ENCODE measurements at regions of chr16 and their contacts with region 1.

Region 1: GRCh38 chr16:6663668-6664067 is 669.0 kb upstream of the RBFOX1 start:
- DNase-seq: no peak
- ATAC-seq: no peak
- H3K4me3 ChIP-seq: no peak overlapping the region
- H3K27ac ChIP-seq: no peak overlapping the region
- H3K4me1 ChIP-seq: no peaks in the 10 kb centered on the region
- H3K27me3 ChIP-seq: no peaks in the 10 kb centered on the region
- CTCF ChIP-seq: no peak
- EP300 ChIP-seq: no peak
- POLR2A ChIP-seq: no peak
- RAD21 ChIP-seq: no peak

Region 2: DNA sequence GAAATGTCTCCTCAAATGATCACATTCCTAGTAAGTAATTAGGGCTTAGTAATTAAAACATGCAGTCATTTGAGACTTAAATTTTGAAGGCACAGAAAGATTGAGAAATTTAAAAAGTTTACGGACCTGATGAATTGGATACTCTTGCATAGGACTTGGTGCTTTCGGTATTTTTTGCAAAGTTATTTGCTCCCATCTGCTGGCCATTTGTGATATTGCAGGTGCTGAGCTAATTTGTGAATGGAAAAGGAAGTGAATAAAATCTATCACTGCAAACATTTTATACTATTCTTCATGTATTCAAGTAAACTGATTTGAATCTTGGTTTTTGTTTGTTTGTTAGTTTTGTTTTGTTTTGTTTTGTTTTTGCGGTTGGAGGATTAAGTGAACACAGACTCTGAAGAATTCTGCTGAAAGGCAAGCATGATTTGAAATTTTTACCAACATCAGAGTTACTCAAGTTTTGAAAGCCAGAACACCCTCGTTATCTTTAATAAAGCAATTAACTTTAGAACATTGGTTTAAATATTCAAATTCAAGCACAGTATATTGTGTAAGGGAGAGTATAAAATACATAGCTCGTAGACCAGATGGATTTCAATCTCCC is 20.5 kb before region 1 on chr16:
- CTCF ChIA-PET with region 1: interaction called, 11 read pairs
- POLR2A ChIA-PET with region 1: no interaction called
- RAD21 ChIA-PET with region 1: no interaction called
- SMC1A ChIA-PET with region 1: interaction called, 3 read pairs
- in situ Hi-C with region 1: no loop called
- intact Hi-C with region 1: no loop called
- DNase-seq: peak; percentile 11
- ATAC-seq: peak; percentile 51
- H3K4me3 ChIP-seq: no peak overlapping the region
- H3K27ac ChIP-seq: no peak overlapping the region
- H3K4me1 ChIP-seq: no peaks in the 10 kb centered on the region
- H3K27me3 ChIP-seq: no peaks in the 10 kb centered on the region
- CTCF ChIP-seq: peak; percentile 72 to 81 (median 78)
- EP300 ChIP-seq: no peak
- POLR2A ChIP-seq: no peak
- RAD21 ChIP-seq: peak; percentile 83

Region 3: DNA sequence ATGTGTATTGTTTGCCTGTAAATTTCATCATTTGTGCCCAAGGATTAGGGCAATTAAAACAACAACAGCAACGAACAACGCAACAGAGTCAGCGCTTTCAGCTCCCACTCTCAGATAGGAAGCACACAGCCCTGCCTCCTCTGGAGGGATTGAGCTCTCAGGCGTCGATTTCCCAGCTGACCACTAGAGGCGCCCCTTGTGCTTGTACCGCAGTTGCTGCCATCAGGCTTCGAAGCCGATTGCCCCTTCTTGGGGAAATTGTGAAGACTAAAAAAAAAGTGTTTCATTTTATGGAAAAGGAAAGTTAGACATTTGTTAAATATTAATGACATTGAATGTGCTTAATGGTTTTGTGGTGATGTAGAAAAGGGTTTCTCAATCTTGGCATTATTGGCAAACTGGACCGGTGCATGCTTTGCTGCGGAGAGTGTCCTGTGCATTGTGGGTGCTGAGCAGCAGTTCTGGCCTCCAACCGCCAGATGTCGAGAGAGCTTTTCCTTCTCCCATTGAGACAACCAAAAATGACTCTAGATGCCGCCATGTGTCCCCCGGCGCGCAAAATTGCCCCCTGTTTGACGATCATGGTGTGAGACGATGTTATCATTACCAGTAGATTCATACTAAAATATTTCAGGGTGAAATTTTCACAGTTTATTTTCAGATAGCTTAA is 18.6 kb after region 1 on chr16:
- CTCF ChIA-PET with region 1: interaction called, 10 read pairs
- POLR2A ChIA-PET with region 1: no interaction called
- RAD21 ChIA-PET with region 1: no interaction called
- SMC1A ChIA-PET with region 1: no interaction called
- in situ Hi-C with region 1: no loop called
- intact Hi-C with region 1: no loop called
- DNase-seq: no peak
- ATAC-seq: no peak
- H3K4me3 ChIP-seq: no peak overlapping the region
- H3K27ac ChIP-seq: no peak overlapping the region
- H3K4me1 ChIP-seq: no peaks in the 10 kb centered on the region
- H3K27me3 ChIP-seq: no peaks in the 10 kb centered on the region
- CTCF ChIP-seq: peak; percentile 39 to 51 (median 40); a peak in 5 of 6 replicates
- EP300 ChIP-seq: no peak
- POLR2A ChIP-seq: no peak
- RAD21 ChIP-seq: no peak

Region 4: DNA sequence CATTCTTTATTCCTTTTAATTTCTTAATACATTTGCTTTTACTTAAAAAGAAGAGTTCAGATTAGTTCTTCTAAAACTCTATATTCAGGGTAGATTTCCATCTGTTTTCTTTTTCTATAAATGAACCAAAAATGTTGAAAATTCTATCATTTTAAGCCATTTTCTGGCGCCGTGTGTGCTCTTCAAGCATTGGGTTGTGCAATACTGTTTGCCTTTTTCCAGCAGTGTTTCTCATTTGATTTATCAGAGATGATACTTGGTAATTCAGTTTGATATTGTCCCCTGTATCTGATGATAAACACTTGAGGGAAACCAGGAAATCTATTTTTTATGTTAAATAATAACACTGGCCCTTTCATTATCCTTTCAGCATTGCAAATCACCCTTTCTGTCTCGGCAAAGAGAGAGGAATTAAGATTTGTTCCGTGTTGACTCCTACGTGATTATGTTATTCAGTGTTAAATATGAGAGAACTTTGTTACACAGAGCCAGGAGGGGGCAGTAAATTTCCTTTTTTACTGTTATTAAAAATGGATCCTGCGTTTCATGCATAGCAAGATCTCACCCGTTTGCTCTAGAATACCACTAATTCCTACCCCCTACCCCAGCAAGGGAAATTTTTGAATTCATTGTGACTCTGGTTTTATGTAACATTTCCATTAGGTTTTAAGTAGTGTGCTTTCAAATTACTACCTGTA is 62.1 kb after region 1 on chr16:
- CTCF ChIA-PET with region 1: no interaction called
- POLR2A ChIA-PET with region 1: no interaction called
- RAD21 ChIA-PET with region 1: interaction called, 4 read pairs
- SMC1A ChIA-PET with region 1: no interaction called
- in situ Hi-C with region 1: loop called (anchors 10 kb)
- intact Hi-C with region 1: no loop called
- DNase-seq: no peak
- ATAC-seq: no peak
- H3K4me3 ChIP-seq: no peak overlapping the region
- H3K27ac ChIP-seq: no peak overlapping the region
- H3K4me1 ChIP-seq: no peaks in the 10 kb centered on the region
- H3K27me3 ChIP-seq: no peaks in the 10 kb centered on the region
- CTCF ChIP-seq: no peak
- EP300 ChIP-seq: no peak
- POLR2A ChIP-seq: no peak
- RAD21 ChIP-seq: no peak

Region 5: GRCh38 chr16:6797223-6797622 is 133.6 kb after region 1 on chr16:
- CTCF ChIA-PET with region 1: no interaction called
- POLR2A ChIA-PET with region 1: no interaction called
- RAD21 ChIA-PET with region 1: no interaction called
- SMC1A ChIA-PET with region 1: no interaction called
- in situ Hi-C with region 1: loop called (anchors 10 kb)
- intact Hi-C with region 1: no loop called
- DNase-seq: no peak
- ATAC-seq: no peak
- H3K4me3 ChIP-seq: no peak overlapping the region
- H3K27ac ChIP-seq: no peak overlapping the region
- H3K4me1 ChIP-seq: no peaks in the 10 kb centered on the region
- H3K27me3 ChIP-seq: no peaks in the 10 kb centered on the region
- CTCF ChIP-seq: no peak
- EP300 ChIP-seq: no peak
- POLR2A ChIP-seq: no peak
- RAD21 ChIP-seq: no peak

Region 6: DNA sequence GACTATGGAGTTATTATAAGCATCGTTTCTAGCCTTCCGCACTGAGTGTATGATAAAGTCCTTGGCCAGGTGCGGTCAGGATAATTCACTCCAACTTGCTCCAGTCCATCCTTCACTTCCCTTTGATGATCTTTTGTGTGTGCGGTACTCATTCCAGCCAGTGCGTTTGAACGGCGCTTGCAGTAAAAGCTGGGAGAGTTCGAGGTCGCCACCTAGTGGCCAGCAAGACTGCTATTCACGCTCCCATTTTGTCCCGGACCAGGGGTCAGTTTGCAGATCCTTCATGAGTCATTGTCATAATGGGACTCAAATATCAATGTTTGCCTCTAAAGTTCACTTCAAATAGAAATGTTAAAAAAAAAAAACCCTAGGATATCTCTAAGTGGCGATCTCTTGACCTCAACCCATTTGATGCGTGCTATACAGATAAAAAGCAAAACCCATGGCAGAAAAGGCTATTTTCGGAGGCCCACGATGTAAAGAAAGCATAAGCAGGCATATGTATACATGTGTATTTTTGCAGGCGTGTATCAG is 1509.5 kb after region 1 on chr16:
- CTCF ChIA-PET with region 1: no interaction called
- POLR2A ChIA-PET with region 1: no interaction called
- RAD21 ChIA-PET with region 1: no interaction called
- SMC1A ChIA-PET with region 1: no interaction called
- in situ Hi-C with region 1: loop called (anchors 25 kb)
- intact Hi-C with region 1: no loop called
- DNase-seq: peak; percentile 2
- ATAC-seq: peak; percentile 82
- H3K4me3 ChIP-seq: no peak overlapping the region
- H3K27ac ChIP-seq: no peak overlapping the region
- H3K4me1 ChIP-seq: no peaks in the 10 kb centered on the region
- H3K27me3 ChIP-seq: no peaks in the 10 kb centered on the region
- CTCF ChIP-seq: peak; percentile 63 to 78 (median 70)
- EP300 ChIP-seq: no peak
- POLR2A ChIP-seq: no peak
- RAD21 ChIP-seq: peak; percentile 47